ENCODE measurements at regions of chr15 and their contacts with region 1.

Region 1: DNA sequence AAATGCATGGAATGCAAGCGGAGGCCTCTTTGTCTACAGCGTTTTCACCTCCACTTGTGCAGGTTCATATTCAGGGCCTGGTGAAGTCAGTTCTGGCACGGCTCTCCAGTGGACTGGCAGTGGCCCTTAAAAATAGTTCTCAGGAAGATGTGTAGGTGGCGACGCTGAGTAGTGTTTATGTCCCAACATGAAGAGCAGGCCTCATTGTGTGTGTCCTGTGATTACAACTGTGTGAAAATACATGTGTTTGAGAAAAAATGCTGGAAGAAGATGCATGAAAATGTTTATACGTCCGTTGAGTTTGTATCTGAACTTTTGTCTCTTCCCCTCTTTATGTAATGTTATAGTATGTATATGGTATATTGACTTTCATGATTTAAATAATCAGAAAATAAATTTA is 7.2 kb downstream of the LIPC start:
- DNase-seq: no peak

Region 2: GRCh38 chr15:58269455-58270414 is 169.2 kb before region 1 on chr15:
- intact Hi-C with region 1: loop called (anchors 10 kb)
- DNase-seq: no peak

Region 3: GRCh38 chr15:58484791-58485600 is 46.0 kb after region 1 on chr15:
- intact Hi-C with region 1: loop called (anchors 5 kb)
- DNase-seq: no peak

Region 4: DNA sequence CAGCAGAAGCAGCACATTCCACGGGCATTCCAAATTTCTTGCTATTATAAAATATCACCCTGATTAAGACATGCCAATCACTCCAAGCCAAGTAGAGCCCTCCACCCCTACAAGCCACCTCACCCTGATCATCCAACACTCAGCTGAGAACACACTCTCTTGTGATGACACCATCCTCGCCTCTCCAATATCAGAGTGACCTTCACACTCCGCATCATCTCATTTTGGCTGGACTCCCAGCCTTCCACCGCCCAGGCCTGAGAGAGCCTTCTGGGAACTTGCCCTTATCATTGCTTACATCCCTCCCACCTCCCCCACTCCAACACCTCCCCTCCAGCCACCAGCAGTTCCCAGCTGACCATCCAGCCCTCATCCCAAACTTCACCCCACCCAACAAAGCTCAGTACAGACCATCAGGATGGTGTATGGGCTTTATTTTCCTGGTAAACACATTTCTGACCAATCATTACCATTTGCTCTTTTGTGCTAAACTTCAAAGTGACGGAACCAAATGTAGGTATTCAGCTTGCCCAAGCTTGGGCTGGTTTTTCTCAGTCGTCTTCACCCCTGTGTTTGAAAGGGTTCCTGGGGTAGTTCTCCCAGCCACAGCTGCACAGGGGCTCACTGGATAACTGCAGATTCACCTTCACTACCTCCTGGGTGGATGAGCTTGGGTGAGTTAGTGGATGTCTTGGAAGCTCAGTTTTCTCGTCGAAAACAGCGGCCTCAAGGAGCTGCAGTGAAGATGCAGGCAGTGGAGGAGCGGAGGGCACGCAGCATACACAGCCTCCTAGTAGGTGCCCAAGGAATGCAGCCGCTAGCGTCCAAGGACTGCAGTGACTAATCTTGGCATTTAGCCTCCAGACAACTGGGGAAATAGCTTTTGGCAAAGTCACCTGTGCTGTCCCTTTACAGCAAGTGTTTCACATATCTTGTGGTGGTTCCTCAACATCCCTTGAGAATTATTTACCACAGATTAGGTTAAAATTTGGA is 108.0 kb after region 1 on chr15:
- intact Hi-C with region 1: loop called (anchors 5 kb)
- DNase-seq: peak; percentile 81

Measured in cardiac septum (tissue), 1 donor.